CD14-positive monocyte (primary cell): ENCODE measurements at regions of chr2 and their contacts with region 1.

Region 1: DNA sequence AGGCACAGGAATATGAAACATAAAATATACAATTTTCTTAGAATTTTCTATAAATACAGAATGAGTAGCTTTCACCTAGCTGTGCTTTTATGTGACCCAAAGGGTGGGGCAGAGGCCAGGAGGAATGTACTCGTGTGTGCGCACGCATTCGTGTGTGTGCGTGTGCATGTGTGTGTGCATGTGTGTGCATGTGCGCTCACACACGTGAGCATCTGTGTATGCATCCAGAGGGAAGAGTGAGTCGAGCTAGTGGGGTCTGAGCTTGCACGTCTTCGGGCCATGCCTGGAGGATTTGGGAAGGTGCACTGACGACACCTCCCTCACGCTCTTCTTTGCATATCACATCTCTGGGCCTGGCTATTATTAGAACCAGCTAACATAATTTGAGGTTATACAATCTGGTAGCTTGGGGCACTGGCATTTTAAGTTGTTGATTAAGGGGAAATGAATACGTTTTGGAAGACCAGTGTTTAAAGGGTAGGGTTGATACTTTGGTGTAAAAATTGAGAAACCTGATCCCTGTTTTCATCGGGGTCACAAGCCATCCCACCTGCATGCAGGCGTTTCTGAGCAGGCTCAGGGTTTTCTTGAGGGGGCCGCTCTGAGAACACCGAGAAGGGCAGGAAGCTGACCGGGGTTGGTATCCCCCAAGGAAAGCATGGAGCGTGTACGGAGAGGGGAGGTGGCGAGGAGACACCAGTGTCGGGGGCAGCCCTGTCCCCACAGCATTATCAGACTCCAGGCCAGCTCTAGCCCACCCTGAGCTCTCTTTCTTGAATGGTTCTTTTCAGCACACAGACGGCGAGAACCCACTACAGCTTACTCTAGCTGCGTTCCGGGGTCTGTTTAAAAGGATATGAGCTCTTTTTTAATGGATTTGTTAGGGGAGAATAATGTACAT is 85.3 kb downstream of the LRRFIP1 start:
- DNase-seq: no peak
- H3K4me3 ChIP-seq: no peak overlapping the region
- H3K4me3 Mint-ChIP-seq: no peak overlapping the region
- H3K27ac ChIP-seq: no peak overlapping the region
- H3K27ac Mint-ChIP-seq: peak overlapping the region in 3 of 7 donors; percentile 12 to 61 (median 16)
- H3K4me1 ChIP-seq: peaks cover 19 to 28% of the 10 kb centered on the region in 2 donors
- H3K4me1 Mint-ChIP-seq: peaks cover 40% of the 10 kb centered on the region
- H3K27me3 ChIP-seq: no peaks in the 10 kb centered on the region
- H3K27me3 Mint-ChIP-seq: no peaks in the 10 kb centered on the region
- CTCF ChIP-seq: no peak

Region 2: DNA sequence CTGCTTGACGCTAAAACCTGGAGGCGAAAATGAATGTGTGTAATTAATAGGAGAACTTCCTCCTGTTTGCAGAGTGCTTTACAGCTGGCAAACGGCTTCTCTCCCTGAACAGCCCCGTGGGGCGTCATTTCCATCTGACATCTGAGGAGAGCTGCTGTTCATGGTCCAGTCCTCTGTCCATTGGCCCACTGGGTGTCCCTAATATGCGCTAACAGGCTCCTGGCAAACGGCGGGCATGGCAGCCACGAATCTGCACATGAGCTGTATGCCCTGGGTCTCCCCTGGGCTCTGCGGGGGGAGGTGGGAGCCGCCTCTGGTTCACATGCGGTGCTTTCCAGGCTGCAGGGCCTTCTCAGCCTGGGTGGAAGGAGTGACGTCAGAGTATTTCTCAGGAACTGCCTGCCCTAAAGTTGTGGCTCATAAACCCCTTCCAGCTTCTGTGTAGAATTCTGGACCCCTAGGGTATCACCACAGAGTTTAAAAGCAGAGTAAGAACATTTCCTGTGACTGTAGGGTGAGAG is 12.2 kb before region 1 on chr2:
- intact Hi-C with region 1: loop called in 1 of 2 experiments (anchors 2 kb)
- DNase-seq: peak; percentile 66 to 90 (median 73)
- H3K4me3 ChIP-seq: peak overlapping the region in 1 of 3 experiments; percentile 59
- H3K4me3 Mint-ChIP-seq: peak overlapping the region in 1 of 2 donors; percentile 49
- H3K27ac ChIP-seq: peak overlapping the region; percentile 77 to 85
- H3K27ac Mint-ChIP-seq: peak overlapping the region; percentile 89 to 99 (median 93)
- H3K4me1 ChIP-seq: peaks cover 98 to 100% of the 10 kb centered on the region in 2 donors
- H3K4me1 Mint-ChIP-seq: peaks cover 99% of the 10 kb centered on the region
- H3K27me3 ChIP-seq: no peaks in the 10 kb centered on the region
- H3K27me3 Mint-ChIP-seq: peaks cover 0 to 2% (median 0%) of the 10 kb centered on the region in 3 donors
- CTCF ChIP-seq: no peak